ENCODE measurements at regions of chr7 and their contacts with region 1.

Region 1: DNA sequence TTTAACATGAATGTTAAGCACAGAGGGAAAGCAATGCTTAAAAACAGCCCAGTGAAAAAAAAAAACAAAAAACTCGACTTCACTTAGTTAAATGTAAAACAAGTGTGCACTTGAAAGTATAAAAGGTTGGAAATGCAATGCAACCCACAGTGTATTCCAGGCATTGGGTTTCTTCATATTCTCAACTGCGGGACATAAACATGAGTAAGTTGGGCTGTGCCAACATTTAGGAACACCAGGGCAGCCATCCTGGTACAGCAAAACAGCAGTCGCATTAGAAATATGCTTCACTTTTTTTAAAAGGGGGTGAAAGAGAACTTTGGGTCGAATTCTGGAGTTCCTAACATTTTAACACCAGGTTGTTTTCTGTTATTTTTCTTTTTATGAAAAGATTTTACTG is 937 bp downstream of the STEAP1 start:
- DNase-seq: no peak
- H3K4me3 ChIP-seq: no peak overlapping the region
- H3K4me3 Mint-ChIP-seq: no peak overlapping the region
- H3K27ac ChIP-seq: no peak overlapping the region
- H3K27ac Mint-ChIP-seq: no peak overlapping the region
- H3K4me1 ChIP-seq: peaks cover 4% of the 10 kb centered on the region
- H3K4me1 Mint-ChIP-seq: peaks cover 2 to 8% (median 4%) of the 10 kb centered on the region in 4 donors
- H3K27me3 ChIP-seq: no peaks in the 10 kb centered on the region
- H3K27me3 Mint-ChIP-seq: peaks cover 5 to 20% of the 10 kb centered on the region in 2 donors

Region 2: DNA sequence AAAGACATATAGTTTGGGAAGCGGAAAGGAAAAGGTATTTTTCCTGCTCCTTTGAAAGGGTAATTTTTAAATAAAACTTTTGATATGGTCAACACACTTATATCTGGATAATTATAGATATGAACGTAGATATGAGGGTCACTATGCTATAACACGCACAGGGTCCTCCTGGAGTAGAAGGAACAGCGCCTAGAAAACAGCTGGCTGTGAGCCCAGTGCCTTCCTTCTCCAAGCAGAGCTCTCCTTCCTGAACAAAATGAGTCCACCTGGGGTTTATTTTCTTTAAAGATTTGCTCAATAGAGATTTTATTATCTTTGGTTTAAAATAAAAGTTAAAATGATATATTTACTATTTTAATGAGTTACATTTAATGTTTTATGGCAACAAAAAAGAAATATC is 12.2 kb after region 1 on chr7:
- CTCF ChIA-PET with region 1: interaction called, 10 read pairs
- POLR2A ChIA-PET with region 1: no interaction called
- intact Hi-C with region 1: no loop called
- DNase-seq: no peak
- H3K4me3 ChIP-seq: no peak overlapping the region
- H3K4me3 Mint-ChIP-seq: no peak overlapping the region
- H3K27ac ChIP-seq: no peak overlapping the region
- H3K27ac Mint-ChIP-seq: no peak overlapping the region
- H3K4me1 ChIP-seq: no peaks in the 10 kb centered on the region
- H3K4me1 Mint-ChIP-seq: no peaks in the 10 kb centered on the region
- H3K27me3 ChIP-seq: no peaks in the 10 kb centered on the region
- H3K27me3 Mint-ChIP-seq: peaks cover 17 to 24% of the 10 kb centered on the region in 2 donors

Region 3: DNA sequence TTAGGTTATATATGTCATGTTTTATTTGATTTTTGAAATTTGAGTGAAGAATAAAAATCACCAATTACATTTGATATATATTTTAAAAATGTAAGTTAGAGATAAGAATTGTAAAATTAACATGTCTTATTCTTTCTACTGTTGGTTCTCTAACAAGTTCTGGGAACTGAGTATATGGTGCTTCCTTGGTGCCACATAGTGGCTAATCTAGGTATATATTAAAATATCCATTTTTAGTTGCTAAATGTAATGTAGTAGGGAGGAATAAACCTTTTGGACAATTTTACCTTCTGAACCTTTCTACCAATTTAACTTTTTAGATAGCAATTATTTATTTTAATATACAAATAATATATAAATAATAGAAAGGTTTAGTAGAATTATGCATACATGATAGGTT is 107.2 kb after region 1 on chr7:
- CTCF ChIA-PET with region 1: interaction called, 3 read pairs
- POLR2A ChIA-PET with region 1: no interaction called
- intact Hi-C with region 1: loop called (anchors 1 kb)
- DNase-seq: no peak
- H3K4me3 ChIP-seq: no peak overlapping the region
- H3K4me3 Mint-ChIP-seq: no peak overlapping the region
- H3K27ac ChIP-seq: no peak overlapping the region
- H3K27ac Mint-ChIP-seq: no peak overlapping the region
- H3K4me1 ChIP-seq: no peaks in the 10 kb centered on the region
- H3K4me1 Mint-ChIP-seq: no peaks in the 10 kb centered on the region
- H3K27me3 ChIP-seq: no peaks in the 10 kb centered on the region
- H3K27me3 Mint-ChIP-seq: peaks cover 2 to 3% of the 10 kb centered on the region in 2 donors

Region 4: GRCh38 chr7:90298145-90299038 is 143.2 kb after region 1 on chr7:
- CTCF ChIA-PET with region 1: interaction called, 5 read pairs
- POLR2A ChIA-PET with region 1: no interaction called
- intact Hi-C with region 1: loop called (anchors 10 kb)
- DNase-seq: peak in 1 of 5 donors; percentile 7
- H3K4me3 ChIP-seq: no peak overlapping the region
- H3K4me3 Mint-ChIP-seq: no peak overlapping the region
- H3K27ac ChIP-seq: no peak overlapping the region
- H3K27ac Mint-ChIP-seq: no peak overlapping the region
- H3K4me1 ChIP-seq: no peaks in the 10 kb centered on the region
- H3K4me1 Mint-ChIP-seq: no peaks in the 10 kb centered on the region
- H3K27me3 ChIP-seq: no peaks in the 10 kb centered on the region
- H3K27me3 Mint-ChIP-seq: peaks cover 2 to 5% of the 10 kb centered on the region in 2 donors

Region 5: DNA sequence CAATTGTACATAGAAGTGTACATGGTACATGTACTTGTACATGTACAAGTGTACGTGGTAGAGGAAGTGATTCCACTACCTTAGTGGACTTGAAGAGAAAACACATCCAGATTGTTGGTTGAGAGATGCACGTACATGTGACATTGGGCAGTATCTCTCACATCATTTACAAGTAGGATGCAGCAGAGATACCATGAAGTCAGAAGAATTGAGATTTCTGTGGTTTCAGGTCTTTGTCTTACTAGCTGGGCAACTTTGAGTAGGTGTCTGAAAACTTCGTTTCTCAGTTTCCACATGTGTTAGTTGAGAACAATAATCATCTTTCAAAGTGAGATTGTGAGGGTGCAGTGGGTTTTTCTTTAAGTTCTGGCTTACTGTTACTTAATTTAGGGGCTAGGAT is 269.5 kb after region 1 on chr7:
- CTCF ChIA-PET with region 1: interaction called, 122 read pairs
- POLR2A ChIA-PET with region 1: interaction called, 4 read pairs
- intact Hi-C with region 1: loop called (anchors 1 kb)
- DNase-seq: no peak
- H3K4me3 ChIP-seq: no peak overlapping the region
- H3K4me3 Mint-ChIP-seq: no peak overlapping the region
- H3K27ac ChIP-seq: no peak overlapping the region
- H3K27ac Mint-ChIP-seq: peak overlapping the region in 1 of 7 donors; percentile 25
- H3K4me1 ChIP-seq: no peaks in the 10 kb centered on the region
- H3K4me1 Mint-ChIP-seq: peaks cover 2 to 9% (median 3%) of the 10 kb centered on the region in 4 donors
- H3K27me3 ChIP-seq: no peaks in the 10 kb centered on the region
- H3K27me3 Mint-ChIP-seq: peaks cover 2 to 3% of the 10 kb centered on the region in 2 donors

Measured in CD4-positive, alpha-beta memory T cell (primary cell).